Vagina (tissue), 2 donors: ENCODE measurements at regions of chr3 and their contacts with region 1.

Region 1: GRCh38 chr3:135869439-135870105 is 96.0 kb upstream of the PPP2R3A start:
- DNase-seq: no peak
- H3K4me3 ChIP-seq: no peak overlapping the region
- H3K27ac ChIP-seq: no peak overlapping the region
- H3K4me1 ChIP-seq: no peaks in the 10 kb centered on the region
- H3K27me3 ChIP-seq: no peaks in the 10 kb centered on the region
- CTCF ChIP-seq: no peak
- POLR2A ChIP-seq: no peak

Region 2: DNA sequence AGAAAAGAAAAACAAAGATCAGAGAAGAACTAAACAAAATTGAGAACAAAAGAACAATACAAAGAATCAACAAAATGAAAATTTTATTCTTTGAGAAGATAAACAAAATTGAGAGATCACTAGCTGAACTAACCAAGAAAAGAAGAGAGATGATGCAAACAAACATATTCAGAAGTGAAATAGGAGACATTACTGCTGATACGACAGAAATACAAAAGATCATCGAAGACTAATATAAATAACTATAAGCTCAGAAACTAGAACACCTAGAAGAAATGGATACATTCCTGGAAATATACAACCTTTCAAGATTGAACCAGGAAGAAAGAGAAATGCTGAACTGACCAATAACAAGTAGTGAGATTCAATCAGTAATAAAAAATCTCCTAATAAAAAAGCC is 437.2 kb before region 1 on chr3:
- intact Hi-C with region 1: loop called (anchors 10 kb)
- DNase-seq: no peak
- H3K4me3 ChIP-seq: no peak overlapping the region
- H3K27ac ChIP-seq: no peak overlapping the region
- H3K4me1 ChIP-seq: no peaks in the 10 kb centered on the region
- H3K27me3 ChIP-seq: no peaks in the 10 kb centered on the region
- CTCF ChIP-seq: no peak
- POLR2A ChIP-seq: no peak

Region 3: GRCh38 chr3:135851201-135852081 is 18.1 kb before region 1 on chr3:
- intact Hi-C with region 1: no loop called
- DNase-seq: no peak
- H3K4me3 ChIP-seq: no peak overlapping the region
- H3K27ac ChIP-seq: no peak overlapping the region
- H3K4me1 ChIP-seq: no peaks in the 10 kb centered on the region
- H3K27me3 ChIP-seq: no peaks in the 10 kb centered on the region
- CTCF ChIP-seq: no peak
- POLR2A ChIP-seq: no peak